PC-3 (cell line): ENCODE measurements at regions of chr9 and their contacts with region 1.

Region 1: DNA sequence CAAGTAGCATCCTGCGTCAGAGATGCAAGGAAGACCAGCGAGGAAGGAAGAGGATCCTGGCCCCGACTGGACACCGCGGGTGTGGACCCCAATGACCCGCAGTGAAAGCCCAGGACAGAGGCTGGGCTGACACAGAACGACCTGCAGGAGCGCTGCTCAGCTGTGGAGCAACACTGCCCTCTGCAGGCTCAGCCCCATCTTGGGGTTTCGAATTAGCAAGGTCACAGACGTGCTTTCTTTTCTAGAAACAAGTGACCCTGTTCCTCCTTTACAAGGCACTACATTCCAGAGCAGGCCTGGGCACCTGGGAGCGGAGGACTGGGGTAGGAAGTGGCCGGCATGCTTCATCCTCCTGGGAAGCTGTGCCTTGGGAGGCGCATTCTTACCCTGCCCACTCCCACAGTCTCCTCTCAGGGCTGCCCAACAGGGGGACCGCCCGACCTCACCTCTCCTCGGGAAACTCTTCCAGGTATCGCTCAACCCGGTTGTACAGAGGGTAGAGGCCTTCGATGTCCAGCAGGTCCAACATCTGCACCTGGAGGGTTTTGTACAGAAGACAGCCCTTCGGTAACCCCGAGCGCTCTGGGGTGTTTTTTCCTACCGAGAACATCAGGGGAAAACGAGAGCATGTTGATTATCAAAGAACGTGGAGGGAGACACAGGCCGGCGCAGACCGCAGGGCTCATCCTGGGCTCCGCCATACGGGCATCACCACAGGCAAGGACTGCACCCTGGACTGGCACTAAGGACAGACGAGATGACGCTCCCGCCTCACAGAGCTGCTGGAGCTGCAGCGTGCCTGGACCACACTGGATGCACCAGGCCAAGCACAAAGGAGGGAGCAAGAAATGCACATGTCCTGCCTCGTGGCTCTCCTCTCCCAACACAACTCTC is 35.0 kb downstream of the IPPK start:
- DNase-seq: peak; percentile 66
- ATAC-seq: peak; percentile 83
- H3K4me3 ChIP-seq: no peak overlapping the region
- H3K27ac ChIP-seq: no peak overlapping the region
- H3K4me1 ChIP-seq: no peaks in the 10 kb centered on the region
- H3K27me3 ChIP-seq: no peaks in the 10 kb centered on the region
- CTCF ChIP-seq: peak; percentile 91

Region 2: GRCh38 chr9:92140074-92140753 is 494.7 kb before region 1 on chr9:
- CTCF ChIA-PET with region 1: no interaction called
- POLR2A ChIA-PET with region 1: no interaction called
- intact Hi-C with region 1: loop called (anchors 5 kb)
- DNase-seq: peak; percentile 73
- ATAC-seq: peak; percentile 52
- H3K4me3 ChIP-seq: peak overlapping the region; percentile 58; the same call in 1 of the 2 replicates
- H3K27ac ChIP-seq: no peak overlapping the region
- H3K4me1 ChIP-seq: peaks cover 5% of the 10 kb centered on the region; the same call in 1 of the 2 replicates
- H3K27me3 ChIP-seq: no peaks in the 10 kb centered on the region
- CTCF ChIP-seq: peak; percentile 78

Region 3: DNA sequence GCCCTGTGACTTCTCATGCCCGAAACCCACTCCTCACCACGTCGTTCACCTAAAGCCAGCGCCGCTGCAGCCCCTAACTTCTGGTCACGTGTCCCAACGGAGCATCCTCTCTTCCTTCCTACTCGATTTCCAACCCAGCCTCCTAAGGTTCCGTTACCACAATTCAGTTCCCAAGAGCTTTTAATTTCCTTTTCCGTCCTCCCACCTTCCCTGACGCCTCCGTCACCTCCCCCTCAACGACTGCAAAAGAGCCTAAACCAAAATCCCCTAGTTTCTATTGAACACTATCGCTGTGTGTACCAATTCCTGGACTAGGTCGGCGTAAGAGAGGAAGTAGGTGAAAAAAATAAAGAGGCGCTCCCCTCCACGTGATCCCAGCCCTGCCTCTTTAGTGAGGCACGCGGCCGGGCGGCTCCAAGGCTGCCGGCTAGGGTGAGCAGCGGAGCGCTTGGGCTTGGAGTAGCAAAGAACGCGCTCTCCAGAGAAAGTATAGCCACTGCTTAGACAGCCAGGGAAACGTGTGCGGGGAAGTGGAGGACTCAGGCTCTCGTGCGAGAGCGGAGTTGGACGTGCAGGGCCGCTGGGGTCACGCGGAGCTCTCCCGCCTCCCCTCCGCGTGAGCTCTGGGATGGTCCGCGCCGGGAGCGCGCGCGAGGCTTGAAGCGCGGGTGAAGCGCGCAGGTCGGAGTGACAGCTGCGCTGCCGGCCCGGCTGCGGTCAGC is 309.5 kb before region 1 on chr9 and contains the starts of genes CENPP and NOL8:
- CTCF ChIA-PET with region 1: no interaction called
- POLR2A ChIA-PET with region 1: no interaction called
- intact Hi-C with region 1: loop called (anchors 1 kb)
- DNase-seq: peak; percentile 76
- ATAC-seq: peak; percentile 90
- H3K4me3 ChIP-seq: peak within 1 kb of the TSS; percentile 79
- H3K27ac ChIP-seq: peak within 1 kb of the TSS; percentile 91
- H3K4me1 ChIP-seq: peaks cover 10% of the 10 kb centered on the region; the same call in 1 of the 2 replicates
- H3K27me3 ChIP-seq: no peaks in the 10 kb centered on the region
- CTCF ChIP-seq: no peak
- total RNA-seq, gene CENPP: 2.7 and 8.3 TPM in 2 replicates
- total RNA-seq, gene NOL8: 21.0 and 22.5 TPM in 2 replicates

Region 4: GRCh38 chr9:92342825-92343488 is 292.0 kb before region 1 on chr9:
- CTCF ChIA-PET with region 1: no interaction called
- POLR2A ChIA-PET with region 1: no interaction called
- intact Hi-C with region 1: loop called (anchors 5 kb)
- DNase-seq: peak; percentile 19
- ATAC-seq: peak; percentile 61
- H3K4me3 ChIP-seq: no peak overlapping the region
- H3K27ac ChIP-seq: no peak overlapping the region
- H3K4me1 ChIP-seq: no peaks in the 10 kb centered on the region
- H3K27me3 ChIP-seq: no peaks in the 10 kb centered on the region
- CTCF ChIP-seq: no peak; the same call in 1 of the 2 replicates

Region 5: DNA sequence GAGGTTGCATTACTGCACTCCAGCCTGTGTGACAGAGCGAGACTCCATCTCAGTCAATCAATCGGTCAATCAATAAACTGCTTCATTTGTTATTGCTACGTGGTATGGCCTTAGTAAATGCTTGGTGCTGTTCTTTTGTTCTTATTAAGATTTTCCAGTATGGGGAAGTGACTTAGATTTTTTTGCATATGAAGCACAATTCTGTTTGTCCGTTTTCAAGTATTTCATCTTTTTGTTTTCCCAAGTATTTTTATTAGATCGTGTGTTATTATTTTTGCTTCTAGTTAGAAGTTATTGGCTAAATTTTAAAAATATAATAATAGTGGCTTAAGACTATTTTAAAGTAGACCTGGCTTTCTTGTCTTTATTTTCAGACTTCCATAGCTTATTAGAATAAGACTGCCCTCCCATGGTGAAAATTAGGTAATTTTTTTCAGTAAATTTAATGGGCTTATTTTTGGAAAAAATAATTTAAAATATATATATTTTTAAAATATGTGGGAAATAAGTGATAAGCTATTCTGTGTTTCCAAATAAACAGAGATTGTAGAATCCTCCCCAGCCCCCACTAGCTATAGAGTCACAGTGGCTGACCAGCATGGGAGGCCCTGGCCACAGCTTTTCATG is 195.9 kb before region 1 on chr9:
- CTCF ChIA-PET with region 1: no interaction called
- POLR2A ChIA-PET with region 1: no interaction called
- intact Hi-C with region 1: loop called (anchors 2 kb)
- DNase-seq: peak; percentile 24
- ATAC-seq: no peak
- H3K4me3 ChIP-seq: no peak overlapping the region
- H3K27ac ChIP-seq: no peak overlapping the region
- H3K4me1 ChIP-seq: peaks cover 8% of the 10 kb centered on the region
- H3K27me3 ChIP-seq: no peaks in the 10 kb centered on the region
- CTCF ChIP-seq: 0 out of 2 replicates have a peak, but pooled peaks have one; percentile 16

Region 6: GRCh38 chr9:92535940-92536850 is 98.8 kb before region 1 on chr9 and contains the start of gene ECM2:
- CTCF ChIA-PET with region 1: no interaction called
- POLR2A ChIA-PET with region 1: no interaction called
- intact Hi-C with region 1: no loop called
- DNase-seq: no peak
- ATAC-seq: no peak
- H3K4me3 ChIP-seq: no peak within 1 kb of the TSS
- H3K27ac ChIP-seq: no peak within 1 kb of the TSS
- H3K4me1 ChIP-seq: no peaks in the 10 kb centered on the region
- H3K27me3 ChIP-seq: no peaks in the 10 kb centered on the region
- CTCF ChIP-seq: no peak
- total RNA-seq, gene ECM2: 0.29 TPM in 1 of 2 replicates, not detected in the other

Region 7: GRCh38 chr9:92660266-92660665 is 25.3 kb after region 1 on chr9:
- CTCF ChIA-PET with region 1: no interaction called
- POLR2A ChIA-PET with region 1: interaction called, 10 read pairs
- intact Hi-C with region 1: no loop called
- DNase-seq: no peak
- ATAC-seq: no peak
- H3K4me3 ChIP-seq: no peak overlapping the region
- H3K27ac ChIP-seq: no peak overlapping the region
- H3K4me1 ChIP-seq: peaks cover 4% of the 10 kb centered on the region
- H3K27me3 ChIP-seq: no peaks in the 10 kb centered on the region
- CTCF ChIP-seq: no peak